ENCODE measurements at regions of chr19 and their contacts with region 1.

Region 1: GRCh38 chr19:7272856-7273578 is 21.2 kb downstream of the INSR start:
- DNase-seq: no peak
- H3K4me3 ChIP-seq: no peak overlapping the region
- H3K27ac ChIP-seq: no peak overlapping the region
- H3K4me1 ChIP-seq: no peaks in the 10 kb centered on the region
- H3K27me3 ChIP-seq: no peaks in the 10 kb centered on the region
- CTCF ChIP-seq: no peak
- POLR2A ChIP-seq: no peak

Region 2: DNA sequence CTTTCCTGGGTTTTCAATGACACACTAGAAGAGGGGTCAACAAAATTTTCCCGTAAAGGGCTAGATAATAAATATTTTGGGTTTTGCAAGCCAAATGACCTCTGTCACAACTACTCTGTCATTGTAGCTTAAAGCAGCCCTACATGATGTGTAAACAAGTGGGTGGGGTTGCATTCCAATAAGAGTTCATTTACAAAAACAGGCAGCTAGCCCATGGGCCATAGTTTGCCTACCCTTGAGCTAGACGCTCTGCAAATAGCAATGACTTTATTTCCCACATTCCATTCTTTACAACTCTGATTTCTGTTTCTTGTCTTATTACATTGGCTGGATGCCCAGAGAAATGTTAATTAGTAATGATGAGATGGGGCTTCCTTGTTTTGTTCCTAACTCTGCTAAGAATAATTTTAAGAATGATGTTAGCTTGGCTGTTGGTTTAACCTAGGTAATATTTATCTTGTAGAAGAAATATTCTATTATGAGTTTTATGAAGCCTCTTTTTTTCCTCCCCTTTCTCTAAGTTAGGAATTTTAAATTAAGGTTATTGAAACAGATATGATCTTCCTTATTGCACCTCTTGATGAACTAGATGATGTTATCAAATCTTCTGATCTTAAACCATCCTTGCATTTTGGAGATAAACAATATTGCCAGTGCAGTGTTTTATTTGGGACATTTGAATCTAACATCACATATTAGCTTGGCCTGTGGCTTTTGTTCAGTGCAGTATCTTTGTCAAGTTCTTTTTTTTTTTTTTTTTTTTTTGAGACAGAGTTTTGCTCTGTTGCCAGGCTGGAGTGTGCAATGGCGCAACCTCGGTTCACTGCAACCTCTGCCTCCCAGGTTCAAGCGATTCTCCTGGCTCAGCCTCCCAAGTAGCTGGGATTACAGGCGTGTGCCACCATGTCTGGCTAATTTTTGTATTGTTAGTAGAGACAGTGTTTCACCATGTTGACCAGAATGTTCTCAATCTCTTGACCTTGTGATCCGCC is 127.2 kb before region 1 on chr19:
- intact Hi-C with region 1: no loop called
- DNase-seq: no peak
- H3K4me3 ChIP-seq: no peak overlapping the region
- H3K27ac ChIP-seq: no peak overlapping the region
- H3K4me1 ChIP-seq: no peaks in the 10 kb centered on the region
- H3K27me3 ChIP-seq: no peaks in the 10 kb centered on the region
- CTCF ChIP-seq: no peak
- POLR2A ChIP-seq: no peak

Region 3: GRCh38 chr19:7254590-7254989 is 18.4 kb before region 1 on chr19:
- intact Hi-C with region 1: loop called (anchors 2 kb)
- DNase-seq: no peak
- H3K4me3 ChIP-seq: no peak overlapping the region
- H3K27ac ChIP-seq: no peak overlapping the region
- H3K4me1 ChIP-seq: peaks cover 30% of the 10 kb centered on the region
- H3K27me3 ChIP-seq: no peaks in the 10 kb centered on the region
- CTCF ChIP-seq: no peak
- POLR2A ChIP-seq: no peak

Region 4: DNA sequence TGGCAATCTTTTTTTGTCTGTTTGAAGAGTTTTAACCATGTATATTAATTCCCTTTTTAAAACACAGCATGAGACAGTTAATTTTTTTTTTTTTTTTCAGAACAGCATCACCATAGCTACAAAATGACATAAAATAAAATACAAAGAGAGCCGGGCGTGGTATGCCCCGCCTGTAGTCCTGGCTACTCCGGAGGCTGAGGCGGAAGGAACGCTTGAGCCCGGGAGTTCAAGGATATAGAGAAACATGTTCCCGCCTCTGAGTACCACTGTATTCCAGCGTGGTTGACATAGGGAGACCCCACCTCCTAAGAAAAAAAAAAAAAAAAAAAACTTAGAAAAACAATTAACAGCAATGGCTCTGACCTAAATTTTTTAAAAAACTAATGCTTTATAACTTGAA is 31.2 kb after region 1 on chr19:
- intact Hi-C with region 1: no loop called
- DNase-seq: no peak
- H3K4me3 ChIP-seq: no peak overlapping the region
- H3K27ac ChIP-seq: no peak overlapping the region
- H3K4me1 ChIP-seq: no peaks in the 10 kb centered on the region
- H3K27me3 ChIP-seq: no peaks in the 10 kb centered on the region
- CTCF ChIP-seq: no peak
- POLR2A ChIP-seq: no peak